ENCODE measurements at regions of chr1 and their contacts with region 1.

Region 1: GRCh38 chr1:214923278-214923915 is 159.1 kb upstream of the KCNK2 start:
- DNase-seq: no peak
- H3K4me3 ChIP-seq: no peak overlapping the region
- H3K27ac ChIP-seq: no peak overlapping the region
- H3K4me1 ChIP-seq: no peaks in the 10 kb centered on the region
- H3K27me3 ChIP-seq: no peaks in the 10 kb centered on the region
- CTCF ChIP-seq: no peak
- EP300 ChIP-seq: no peak
- POLR2A ChIP-seq: no peak

Region 2: DNA sequence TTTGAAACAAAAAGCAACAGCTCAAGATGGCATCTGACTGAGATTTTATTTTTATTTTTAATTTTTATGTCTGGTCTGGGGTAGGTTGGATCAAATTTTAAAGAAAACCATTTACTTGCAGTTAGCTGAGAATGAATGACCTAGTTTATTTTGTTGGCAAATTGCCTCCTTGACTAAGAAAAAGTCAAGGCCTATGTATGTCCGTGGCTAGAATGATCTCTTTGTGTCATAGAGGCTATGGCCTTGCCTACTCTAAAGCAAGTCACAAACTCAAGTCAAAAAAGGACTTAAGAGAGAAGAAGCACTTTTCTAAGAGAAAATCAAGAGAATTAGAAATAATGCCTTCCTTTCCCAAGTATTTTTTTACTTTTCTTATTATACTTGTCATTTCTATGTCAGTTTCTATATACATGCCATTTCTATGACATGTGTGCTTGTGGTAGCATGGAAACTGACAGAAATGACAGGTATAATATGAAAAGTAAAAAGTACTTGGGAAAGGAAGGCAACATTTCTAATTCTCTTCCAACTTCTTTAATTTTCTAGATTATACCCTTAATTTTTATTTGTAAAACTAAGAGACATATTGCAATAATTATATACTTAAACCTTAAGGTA is 183.7 kb before region 1 on chr1:
- intact Hi-C with region 1: no loop called
- DNase-seq: no peak
- H3K4me3 ChIP-seq: no peak overlapping the region
- H3K27ac ChIP-seq: no peak overlapping the region
- H3K4me1 ChIP-seq: no peaks in the 10 kb centered on the region
- H3K27me3 ChIP-seq: no peaks in the 10 kb centered on the region
- CTCF ChIP-seq: no peak
- EP300 ChIP-seq: no peak
- POLR2A ChIP-seq: no peak

Region 3: GRCh38 chr1:215466361-215466760 is 543.0 kb after region 1 on chr1:
- intact Hi-C with region 1: loop called in 1 of 4 experiments (anchors 5 kb)
- DNase-seq: no peak
- H3K4me3 ChIP-seq: no peak overlapping the region
- H3K27ac ChIP-seq: no peak overlapping the region
- H3K4me1 ChIP-seq: no peaks in the 10 kb centered on the region
- H3K27me3 ChIP-seq: no peaks in the 10 kb centered on the region
- CTCF ChIP-seq: no peak
- EP300 ChIP-seq: no peak
- POLR2A ChIP-seq: no peak